ENCODE measurements at regions of chr17 and their contacts with region 1.

Region 1: DNA sequence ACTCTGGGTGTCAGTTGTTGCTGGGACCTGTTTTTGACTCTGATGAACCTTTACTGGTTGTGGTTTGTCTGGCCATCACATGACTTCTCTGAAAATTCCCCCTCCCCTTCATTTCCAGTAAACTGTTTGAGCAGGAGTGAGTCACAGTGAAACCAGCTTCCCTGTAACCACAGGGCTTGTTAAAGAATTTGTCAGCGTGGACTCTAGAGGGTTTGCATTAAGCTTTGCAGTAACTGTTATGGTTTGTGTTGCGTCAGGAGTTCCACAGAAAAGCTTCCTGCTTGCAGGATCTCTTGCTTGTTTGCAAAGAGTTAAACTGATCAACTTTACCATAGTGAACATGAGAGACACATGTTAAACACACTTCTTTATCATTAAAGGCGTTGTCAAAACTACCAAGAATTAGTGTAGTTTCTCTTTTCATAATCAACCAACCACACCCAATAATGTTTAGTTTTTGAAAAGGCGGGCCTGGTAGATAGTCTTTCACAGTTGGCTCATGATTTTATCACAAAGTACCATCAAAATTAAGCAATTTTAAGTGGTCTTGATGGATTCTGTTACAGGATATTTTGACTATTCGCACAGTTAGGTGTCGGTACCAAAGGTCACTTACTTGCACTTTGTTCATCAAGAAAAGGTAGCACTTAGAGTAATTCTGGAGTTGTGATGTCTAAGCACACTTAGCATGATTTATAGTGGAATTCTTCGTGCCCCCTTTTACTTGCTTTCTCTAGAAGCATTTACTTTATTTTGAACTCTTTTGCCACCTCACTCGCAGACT is 79.3 kb downstream of the VMP1 start:
- DNase-seq: peak; percentile 96
- H3K4me3 Mint-ChIP-seq: peak overlapping the region; percentile 83
- H3K27ac Mint-ChIP-seq: peak overlapping the region; percentile 100
- H3K4me1 Mint-ChIP-seq: peaks cover 56% of the 10 kb centered on the region
- H3K27me3 Mint-ChIP-seq: no peaks in the 10 kb centered on the region

Region 2: GRCh38 chr17:59427425-59427921 is 359.3 kb before region 1 on chr17:
- intact Hi-C with region 1: no loop called
- DNase-seq: peak; percentile 61
- H3K4me3 Mint-ChIP-seq: no peak overlapping the region
- H3K27ac Mint-ChIP-seq: peak overlapping the region; percentile 31
- H3K4me1 Mint-ChIP-seq: peaks cover 30% of the 10 kb centered on the region
- H3K27me3 Mint-ChIP-seq: peaks cover 2% of the 10 kb centered on the region

Region 3: GRCh38 chr17:59762513-59763374 is 24.0 kb before region 1 on chr17:
- intact Hi-C with region 1: loop called (anchors 1 kb)
- DNase-seq: peak; percentile 76
- H3K4me3 Mint-ChIP-seq: peak overlapping the region; percentile 55
- H3K27ac Mint-ChIP-seq: peak overlapping the region; percentile 96
- H3K4me1 Mint-ChIP-seq: peaks cover 41% of the 10 kb centered on the region
- H3K27me3 Mint-ChIP-seq: no peaks in the 10 kb centered on the region

Region 4: GRCh38 chr17:59829217-59830006 is 42.7 kb after region 1 on chr17:
- intact Hi-C with region 1: loop called (anchors 1 kb)
- DNase-seq: peak; percentile 89
- H3K4me3 Mint-ChIP-seq: peak overlapping the region; percentile 86
- H3K27ac Mint-ChIP-seq: peak overlapping the region; percentile 97
- H3K4me1 Mint-ChIP-seq: peaks cover 72% of the 10 kb centered on the region
- H3K27me3 Mint-ChIP-seq: no peaks in the 10 kb centered on the region

Region 5: DNA sequence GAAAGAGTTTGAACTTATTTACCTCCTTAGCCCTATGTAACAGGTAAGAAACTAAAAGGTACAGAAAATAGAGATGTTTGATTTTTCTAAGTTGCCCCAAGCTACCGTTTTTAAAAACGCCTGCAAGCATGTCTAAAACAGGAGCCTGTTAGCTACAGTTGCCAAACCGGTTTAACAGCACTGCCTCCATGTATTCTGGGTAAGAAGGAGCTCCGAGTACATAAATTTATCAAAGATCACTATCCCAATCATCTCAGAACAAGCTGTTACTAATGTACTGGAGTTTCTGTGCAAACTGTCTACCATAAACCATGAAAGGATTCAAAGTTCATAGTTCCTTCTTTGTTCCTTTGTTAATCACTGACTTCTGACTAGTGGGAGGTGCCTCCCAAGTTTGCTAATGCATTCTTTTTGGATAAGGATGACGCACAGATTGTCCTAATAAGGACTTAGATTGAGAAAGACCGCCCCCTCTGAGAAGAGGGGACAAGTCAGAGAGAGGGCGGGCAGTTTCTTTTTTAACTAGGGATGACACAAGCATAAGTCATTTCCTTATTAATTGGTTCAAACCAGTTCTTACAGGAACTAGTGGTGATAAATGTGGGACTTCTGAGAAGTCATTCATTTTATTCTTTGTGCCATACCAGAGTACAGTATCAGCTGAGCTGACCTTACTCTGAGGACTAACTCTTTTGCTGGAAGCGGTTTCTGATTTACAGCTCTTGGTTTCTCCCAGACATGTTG is 50.8 kb after region 1 on chr17:
- intact Hi-C with region 1: loop called (anchors 1 kb)
- DNase-seq: peak; percentile 94
- H3K4me3 Mint-ChIP-seq: peak overlapping the region; percentile 98
- H3K27ac Mint-ChIP-seq: peak overlapping the region; percentile 99
- H3K4me1 Mint-ChIP-seq: peaks cover 32% of the 10 kb centered on the region
- H3K27me3 Mint-ChIP-seq: peaks cover 2% of the 10 kb centered on the region

Region 6: GRCh38 chr17:59846394-59847165 is 59.9 kb after region 1 on chr17:
- intact Hi-C with region 1: loop called (anchors 2 kb)
- DNase-seq: peak; percentile 86
- H3K4me3 Mint-ChIP-seq: peak overlapping the region; percentile 47
- H3K27ac Mint-ChIP-seq: peak overlapping the region; percentile 92
- H3K4me1 Mint-ChIP-seq: peaks cover 53% of the 10 kb centered on the region
- H3K27me3 Mint-ChIP-seq: no peaks in the 10 kb centered on the region

Region 7: DNA sequence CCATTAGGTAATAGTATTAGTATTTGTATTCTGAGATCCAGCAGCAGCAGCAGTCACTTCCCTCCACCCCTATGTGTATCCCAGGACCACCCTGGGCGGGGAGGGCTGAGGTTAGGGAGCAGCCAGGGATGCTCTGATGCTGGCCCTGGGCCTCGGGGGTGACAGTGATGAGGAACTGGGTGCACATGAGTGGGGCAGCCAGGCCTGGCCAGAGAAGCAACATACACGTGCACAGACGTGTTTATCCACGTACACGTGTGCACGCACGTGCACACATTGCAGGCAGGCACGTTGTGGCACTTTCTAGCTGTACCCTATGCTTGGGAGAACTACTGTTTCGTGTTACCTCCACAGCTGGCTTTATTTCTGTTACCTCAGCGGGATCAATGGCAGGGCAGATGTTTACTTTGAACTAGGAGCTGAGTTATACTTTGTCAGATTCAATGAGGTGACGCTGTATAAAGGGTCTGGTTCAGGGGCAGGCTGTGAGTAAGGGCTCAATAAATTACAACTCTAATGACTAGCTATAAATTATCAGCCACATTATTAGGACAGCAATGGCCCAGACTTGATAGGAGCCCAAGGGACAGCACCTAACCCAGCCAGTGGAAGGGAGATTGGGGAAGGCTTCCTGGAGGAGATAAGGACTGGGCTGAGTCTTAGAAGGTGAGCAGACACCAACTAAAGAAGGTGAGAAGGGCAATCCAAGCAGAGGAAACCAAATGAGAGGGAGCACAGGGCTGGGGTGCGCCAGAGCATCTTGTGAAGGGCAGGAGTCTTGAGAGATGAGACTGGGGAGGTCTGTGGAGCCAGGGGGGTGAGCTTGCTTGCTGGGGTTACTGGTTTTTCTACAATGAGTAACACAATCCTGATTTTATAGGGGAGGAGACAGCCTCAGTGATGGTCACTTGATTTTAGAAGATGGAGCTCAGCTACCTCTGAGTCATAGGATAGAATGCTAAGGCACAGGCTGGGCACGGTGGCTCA is 340.6 kb after region 1 on chr17:
- intact Hi-C with region 1: no loop called
- DNase-seq: peak; percentile 51
- H3K4me3 Mint-ChIP-seq: no peak overlapping the region
- H3K27ac Mint-ChIP-seq: no peak overlapping the region
- H3K4me1 Mint-ChIP-seq: no peaks in the 10 kb centered on the region
- H3K27me3 Mint-ChIP-seq: no peaks in the 10 kb centered on the region